PC-3 (cell line): ENCODE measurements at regions of chr3 and their contacts with region 1.

Region 1: DNA sequence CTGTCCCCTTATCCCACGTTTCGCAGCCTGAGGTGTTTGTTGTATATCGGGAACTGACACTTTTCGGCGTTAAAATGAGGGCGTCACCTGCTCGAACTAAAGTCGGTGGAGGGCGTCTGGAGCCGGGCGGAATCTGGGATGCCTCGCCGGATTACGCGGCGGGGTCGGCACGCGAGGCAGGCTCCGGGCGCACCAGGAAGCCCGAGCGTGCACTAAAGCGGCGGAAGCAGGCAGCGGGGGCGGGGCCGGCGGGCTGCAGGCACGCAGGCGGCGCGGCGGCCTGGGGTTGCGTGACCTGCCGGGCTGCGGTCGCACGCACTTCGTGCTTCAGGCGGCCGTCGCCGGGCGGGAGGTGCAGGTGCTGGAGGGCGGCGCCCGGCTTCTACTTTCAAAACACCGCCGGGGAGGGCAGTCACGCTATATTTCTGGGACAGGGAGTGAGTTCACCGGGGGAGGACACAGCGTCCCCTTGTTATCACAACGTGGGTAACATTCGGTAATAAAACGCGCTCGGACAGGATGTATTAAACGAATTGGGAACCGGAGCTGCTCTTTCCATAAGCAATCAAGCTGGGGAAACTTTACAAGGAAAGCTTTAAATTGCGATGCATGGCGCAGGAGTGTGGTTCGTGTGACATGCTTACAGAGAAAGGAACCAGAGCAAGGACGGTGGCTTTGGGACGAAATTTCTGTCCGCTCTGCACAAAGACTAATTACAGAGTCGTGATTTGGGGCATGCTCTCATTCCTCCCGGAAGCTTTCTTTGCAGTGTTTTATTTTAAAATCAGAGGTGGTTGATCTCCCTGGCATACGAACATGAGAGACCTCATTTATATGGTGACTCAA is 9.1 kb upstream of the LEKR1 start:
- DNase-seq: peak; percentile 95
- ATAC-seq: peak; percentile 68
- H3K4me3 ChIP-seq: peak overlapping the region; percentile 64
- H3K27ac ChIP-seq: peak overlapping the region; percentile 98
- H3K4me1 ChIP-seq: peaks cover 65% of the 10 kb centered on the region
- H3K27me3 ChIP-seq: no peaks in the 10 kb centered on the region
- CTCF ChIP-seq: 0 out of 2 replicates have a peak, but pooled peaks have one; percentile 18

Region 2: DNA sequence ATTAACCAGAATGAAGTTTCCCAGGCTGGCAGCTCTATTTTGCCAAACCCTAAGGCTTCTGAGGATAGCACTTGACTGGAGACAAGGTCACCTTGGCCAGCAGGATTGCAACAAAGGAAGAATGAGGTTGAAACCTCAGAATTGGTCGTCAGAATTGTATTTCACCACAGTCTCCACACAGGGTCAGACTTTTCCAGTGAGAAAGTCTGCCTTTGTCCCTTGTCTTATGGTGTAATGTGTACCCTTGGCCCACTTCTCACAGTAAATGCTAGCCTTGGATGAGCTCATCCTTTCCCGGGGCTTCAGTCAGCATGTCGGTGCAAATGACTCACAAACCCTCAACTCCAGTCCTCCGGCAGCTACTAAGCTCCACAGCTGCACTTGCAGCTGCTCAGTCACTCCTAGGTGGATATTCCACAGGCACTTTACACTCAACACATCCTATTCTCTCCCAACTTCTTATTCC is 281.8 kb before region 1 on chr3:
- CTCF ChIA-PET with region 1: no interaction called
- POLR2A ChIA-PET with region 1: no interaction called
- intact Hi-C with region 1: loop called (anchors 5 kb)
- DNase-seq: peak; percentile 97
- ATAC-seq: peak; percentile 95
- H3K4me3 ChIP-seq: no peak overlapping the region
- H3K27ac ChIP-seq: peak overlapping the region; percentile 79
- H3K4me1 ChIP-seq: peaks cover 28% of the 10 kb centered on the region
- H3K27me3 ChIP-seq: no peaks in the 10 kb centered on the region
- CTCF ChIP-seq: peak; percentile 71

Region 3: GRCh38 chr3:156547637-156548036 is 269.4 kb before region 1 on chr3:
- CTCF ChIA-PET with region 1: no interaction called
- POLR2A ChIA-PET with region 1: no interaction called
- intact Hi-C with region 1: no loop called
- DNase-seq: no peak
- ATAC-seq: no peak
- H3K4me3 ChIP-seq: no peak overlapping the region
- H3K27ac ChIP-seq: no peak overlapping the region
- H3K4me1 ChIP-seq: peaks cover 24% of the 10 kb centered on the region
- H3K27me3 ChIP-seq: no peaks in the 10 kb centered on the region
- CTCF ChIP-seq: no peak

Region 4: GRCh38 chr3:156787926-156788663 is 28.9 kb before region 1 on chr3:
- CTCF ChIA-PET with region 1: no interaction called
- POLR2A ChIA-PET with region 1: no interaction called
- intact Hi-C with region 1: loop called (anchors 1 kb)
- DNase-seq: peak; percentile 94
- ATAC-seq: peak; percentile 73
- H3K4me3 ChIP-seq: peak overlapping the region; percentile 28; the same call in 1 of the 2 replicates
- H3K27ac ChIP-seq: peak overlapping the region; percentile 91
- H3K4me1 ChIP-seq: peaks cover 59% of the 10 kb centered on the region
- H3K27me3 ChIP-seq: no peaks in the 10 kb centered on the region
- CTCF ChIP-seq: no peak

Region 5: DNA sequence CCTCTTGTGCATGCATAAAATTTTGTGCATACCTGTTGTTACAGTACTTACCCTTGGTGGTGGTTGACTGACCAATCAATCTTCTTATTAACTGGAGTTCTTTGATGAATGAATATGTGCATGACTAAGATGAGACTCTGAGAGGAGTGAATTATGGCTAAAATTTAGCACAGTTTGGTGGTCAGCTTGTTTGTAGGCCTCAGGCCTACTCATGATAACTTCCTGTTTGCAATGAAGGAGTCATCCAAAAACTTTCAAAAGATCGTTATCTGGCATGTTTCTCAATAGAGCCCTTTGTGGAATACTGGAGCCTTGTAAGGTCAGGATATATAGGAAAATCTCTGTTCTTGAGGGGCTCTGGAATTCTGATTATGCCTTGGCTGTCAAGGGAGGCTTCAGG is 75.7 kb after region 1 on chr3:
- CTCF ChIA-PET with region 1: no interaction called
- POLR2A ChIA-PET with region 1: no interaction called
- intact Hi-C with region 1: loop called (anchors 2 kb)
- DNase-seq: peak; percentile 97
- ATAC-seq: peak; percentile 94
- H3K4me3 ChIP-seq: no peak overlapping the region
- H3K27ac ChIP-seq: peak overlapping the region; percentile 88
- H3K4me1 ChIP-seq: peaks cover 22% of the 10 kb centered on the region
- H3K27me3 ChIP-seq: no peaks in the 10 kb centered on the region
- CTCF ChIP-seq: no peak

Region 6: DNA sequence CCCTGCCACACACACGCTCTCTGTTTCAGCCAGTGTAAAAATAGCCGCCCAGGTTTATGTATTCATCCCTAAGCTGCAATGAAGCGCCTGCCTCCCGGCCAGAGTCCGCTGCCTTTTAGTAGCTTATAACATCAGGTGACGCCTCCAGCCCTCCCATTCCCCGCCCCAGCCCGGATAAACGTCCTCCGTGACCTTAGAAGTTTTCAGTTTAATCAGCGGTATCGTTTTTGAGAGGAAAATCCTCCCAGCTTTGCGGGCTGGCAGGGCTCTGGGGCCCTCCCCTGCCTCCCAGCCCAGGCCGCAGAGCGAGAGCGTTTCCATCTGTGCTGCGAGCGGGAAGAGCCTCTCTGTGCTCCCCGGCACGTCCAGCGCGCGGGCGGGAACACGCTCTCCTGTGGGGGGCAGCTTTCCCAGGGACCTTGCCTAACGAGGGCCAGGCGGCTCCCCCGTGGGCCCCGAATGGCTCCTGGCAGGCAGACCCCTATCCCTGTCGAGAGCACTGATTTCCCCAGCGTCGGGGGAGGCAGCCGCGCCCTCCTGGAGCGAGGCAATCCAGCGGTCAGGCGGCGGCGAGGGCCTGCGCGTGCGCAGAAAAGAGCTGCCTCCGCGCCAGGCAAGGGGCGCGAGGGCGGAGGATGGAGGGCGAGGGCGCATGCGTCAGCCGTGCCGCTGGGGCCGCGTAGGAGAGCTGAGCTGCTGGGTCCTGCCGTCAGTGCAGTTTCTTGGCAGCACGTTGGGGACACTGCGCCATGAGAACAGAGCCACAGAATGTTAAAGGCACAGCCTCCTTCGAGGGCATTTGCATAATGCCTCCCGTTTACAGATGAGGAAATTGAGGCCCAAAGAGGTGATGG is 271.8 kb after region 1 on chr3:
- CTCF ChIA-PET with region 1: no interaction called
- POLR2A ChIA-PET with region 1: interaction called, 14 read pairs
- intact Hi-C with region 1: no loop called
- DNase-seq: peak; percentile 93
- ATAC-seq: peak; percentile 84
- H3K4me3 ChIP-seq: peak overlapping the region; percentile 70
- H3K27ac ChIP-seq: peak overlapping the region; percentile 98
- H3K4me1 ChIP-seq: peaks cover 41% of the 10 kb centered on the region
- H3K27me3 ChIP-seq: no peaks in the 10 kb centered on the region
- CTCF ChIP-seq: peak; percentile 14; the same call in 1 of the 2 replicates

Region 7: DNA sequence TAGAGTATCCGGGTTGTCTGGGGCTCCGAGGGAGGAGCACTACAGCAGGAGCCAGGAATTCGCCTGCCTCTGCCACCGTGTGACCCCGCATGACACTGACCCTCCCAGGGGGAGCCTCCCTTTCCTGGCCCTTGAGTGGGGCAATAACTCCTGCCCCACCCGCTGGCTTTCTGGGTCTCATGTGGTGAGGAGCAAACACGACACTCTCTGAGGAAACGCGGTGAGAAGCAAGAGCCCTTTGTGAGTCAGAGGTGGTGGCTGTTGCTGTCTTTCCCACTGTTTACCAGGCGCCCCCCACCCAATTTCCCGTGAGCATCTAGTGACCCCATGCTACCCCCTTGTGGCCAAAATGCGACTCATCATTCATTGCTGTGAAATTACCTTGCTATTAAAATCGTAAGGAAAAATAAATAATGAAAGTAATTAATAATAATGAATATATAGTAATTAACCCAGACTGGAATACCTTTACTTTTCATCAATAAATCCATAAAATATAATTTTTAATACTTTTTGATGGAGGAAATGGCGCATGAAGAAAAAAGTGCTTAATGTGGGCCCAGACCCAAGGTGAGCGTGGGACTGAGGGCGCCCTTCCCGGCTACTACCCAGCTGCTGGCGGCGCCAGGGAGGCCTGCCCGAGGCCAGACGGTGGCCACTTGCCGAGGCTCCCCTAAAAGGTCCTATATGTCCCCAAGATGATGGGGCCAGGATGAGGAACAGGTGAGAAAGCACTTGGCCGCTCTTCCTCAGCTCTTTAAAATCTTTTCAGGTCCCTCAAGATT is 313.6 kb after region 1 on chr3:
- CTCF ChIA-PET with region 1: no interaction called
- POLR2A ChIA-PET with region 1: no interaction called
- intact Hi-C with region 1: loop called (anchors 1 kb)
- DNase-seq: peak; percentile 95
- ATAC-seq: peak; percentile 49
- H3K4me3 ChIP-seq: peak overlapping the region; percentile 33; the same call in 1 of the 2 replicates
- H3K27ac ChIP-seq: peak overlapping the region; percentile 99
- H3K4me1 ChIP-seq: peaks cover 98% of the 10 kb centered on the region
- H3K27me3 ChIP-seq: no peaks in the 10 kb centered on the region
- CTCF ChIP-seq: peak; percentile 76